IMR-90 (cell line): ENCODE measurements at regions of chr18 and their contacts with region 1.

Region 1: DNA sequence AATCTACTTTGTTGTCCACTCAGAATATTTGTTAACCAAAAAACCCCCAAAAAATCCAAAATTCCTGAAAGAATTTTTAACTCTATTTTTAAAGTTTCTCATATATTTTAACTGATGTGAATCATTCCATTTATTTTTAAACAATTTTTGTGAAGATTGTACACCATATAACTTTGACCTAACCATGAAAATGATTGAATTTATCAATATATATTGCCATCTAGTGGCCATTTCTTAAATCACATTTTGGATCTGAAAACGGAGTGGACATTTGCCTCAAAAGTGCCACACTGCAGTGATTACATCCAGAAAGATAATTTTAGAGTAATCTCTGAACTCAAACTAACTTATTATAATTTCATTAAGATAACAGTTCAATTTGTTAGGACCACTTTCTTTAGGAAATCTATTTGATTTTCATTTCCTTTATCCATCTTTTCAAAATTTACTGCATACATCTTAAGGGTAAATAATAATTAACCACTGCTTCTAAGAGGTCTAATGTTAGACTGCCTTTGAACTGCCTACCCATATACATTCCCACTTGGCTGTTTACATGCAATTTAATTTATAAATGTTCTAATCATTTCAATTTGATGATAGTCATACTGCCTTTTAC is 71.1 kb downstream of the DSC3 start:
- DNase-seq: peak; percentile 11
- ATAC-seq: peak; percentile 59
- H3K4me3 ChIP-seq: no peak overlapping the region
- H3K27ac ChIP-seq: no peak overlapping the region
- H3K4me1 ChIP-seq: no peaks in the 10 kb centered on the region
- H3K27me3 ChIP-seq: no peaks in the 10 kb centered on the region
- CTCF ChIP-seq: peak; percentile 47
- POLR2A ChIP-seq: no peak
- RAD21 ChIP-seq: 0 out of 2 replicates have a peak, but pooled peaks have one; percentile 20

Region 2: GRCh38 chr18:29874519-29875098 is 1096.8 kb before region 1 on chr18:
- CTCF ChIA-PET with region 1: no interaction called
- POLR2A ChIA-PET with region 1: no interaction called
- dilution Hi-C with region 1: no loop called
- in situ Hi-C with region 1: no loop called
- intact Hi-C with region 1: loop called (anchors 1 kb)
- DNase-seq: peak; percentile 20
- ATAC-seq: peak; percentile 40; the same call in 1 of the 2 replicates
- H3K4me3 ChIP-seq: no peak overlapping the region
- H3K27ac ChIP-seq: no peak overlapping the region
- H3K4me1 ChIP-seq: no peaks in the 10 kb centered on the region
- H3K27me3 ChIP-seq: no peaks in the 10 kb centered on the region
- CTCF ChIP-seq: peak; percentile 57
- POLR2A ChIP-seq: no peak
- RAD21 ChIP-seq: peak; percentile 50

Region 3: DNA sequence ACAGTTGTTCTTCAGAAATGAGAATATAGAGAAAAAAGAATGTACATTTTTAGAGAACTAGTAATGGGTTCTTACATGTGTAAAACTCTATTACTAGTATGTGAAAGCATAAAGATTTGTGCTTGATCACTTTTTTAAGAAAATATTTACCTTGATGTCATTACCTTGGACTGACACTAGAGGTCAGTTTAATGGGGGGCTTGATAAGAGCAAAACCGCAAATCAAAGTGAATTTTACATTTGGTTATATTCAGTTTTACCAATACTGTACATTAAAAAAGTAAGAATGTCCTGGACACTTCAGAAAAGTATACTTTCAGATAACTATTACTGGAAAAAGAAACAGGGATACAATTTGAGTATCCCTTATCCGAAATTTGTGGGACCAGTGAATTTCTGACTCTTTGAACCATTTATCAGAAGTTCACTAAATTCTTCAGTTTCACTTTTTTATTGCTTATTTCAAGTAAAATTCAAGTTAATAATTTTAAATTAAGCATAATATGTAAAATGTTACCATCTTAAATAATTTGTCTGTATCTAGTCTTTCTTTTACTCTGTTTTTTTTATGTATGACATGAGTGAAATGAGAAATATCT is 1078.4 kb before region 1 on chr18:
- CTCF ChIA-PET with region 1: no interaction called
- POLR2A ChIA-PET with region 1: no interaction called
- dilution Hi-C with region 1: no loop called
- in situ Hi-C with region 1: no loop called
- intact Hi-C with region 1: loop called (anchors 5 kb)
- DNase-seq: no peak
- ATAC-seq: no peak
- H3K4me3 ChIP-seq: no peak overlapping the region
- H3K27ac ChIP-seq: no peak overlapping the region
- H3K4me1 ChIP-seq: no peaks in the 10 kb centered on the region
- H3K27me3 ChIP-seq: no peaks in the 10 kb centered on the region
- CTCF ChIP-seq: peak; percentile 41
- POLR2A ChIP-seq: no peak
- RAD21 ChIP-seq: no peak

Region 4: GRCh38 chr18:30814446-30814845 is 157.0 kb before region 1 on chr18:
- CTCF ChIA-PET with region 1: no interaction called
- POLR2A ChIA-PET with region 1: no interaction called
- dilution Hi-C with region 1: no loop called
- in situ Hi-C with region 1: no loop called
- intact Hi-C with region 1: no loop called
- DNase-seq: no peak
- ATAC-seq: no peak
- H3K4me3 ChIP-seq: no peak overlapping the region
- H3K27ac ChIP-seq: no peak overlapping the region
- H3K4me1 ChIP-seq: no peaks in the 10 kb centered on the region
- H3K27me3 ChIP-seq: no peaks in the 10 kb centered on the region
- CTCF ChIP-seq: no peak
- POLR2A ChIP-seq: no peak
- RAD21 ChIP-seq: no peak

Region 5: DNA sequence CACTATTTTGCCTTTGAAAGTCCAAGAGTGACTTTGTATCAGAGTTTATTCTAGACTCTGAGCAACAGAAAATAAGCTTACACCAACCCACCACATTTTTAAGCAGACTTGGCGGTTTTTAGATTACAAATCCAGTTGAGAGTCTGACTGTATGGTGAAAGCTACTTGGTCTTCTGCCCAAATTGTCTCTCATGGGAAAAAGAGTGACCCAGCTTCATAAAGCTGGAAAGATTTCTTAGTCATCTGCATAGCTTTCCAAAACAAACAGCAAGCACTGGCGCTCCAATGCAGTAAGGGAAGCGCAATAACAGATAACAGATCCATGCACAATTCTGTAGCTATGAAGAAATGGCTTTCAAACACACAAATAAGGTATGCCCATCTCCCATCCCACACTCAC is 353.6 kb after region 1 on chr18:
- CTCF ChIA-PET with region 1: no interaction called
- POLR2A ChIA-PET with region 1: no interaction called
- dilution Hi-C with region 1: no loop called
- in situ Hi-C with region 1: no loop called
- intact Hi-C with region 1: no loop called
- DNase-seq: peak; percentile 71
- ATAC-seq: peak; percentile 21; the same call in 1 of the 2 replicates
- H3K4me3 ChIP-seq: no peak overlapping the region
- H3K27ac ChIP-seq: no peak overlapping the region
- H3K4me1 ChIP-seq: no peaks in the 10 kb centered on the region
- H3K27me3 ChIP-seq: no peaks in the 10 kb centered on the region
- CTCF ChIP-seq: no peak
- POLR2A ChIP-seq: no peak
- RAD21 ChIP-seq: no peak